ENCODE measurements at regions of chr3 and their contacts with region 1.

Region 1: GRCh38 chr3:112642912-112643506 is 2.1 kb upstream of the CCDC80 start:
- DNase-seq: peak; percentile 58 to 89 (median 80)
- ATAC-seq: peak; percentile 97
- H3K4me3 ChIP-seq: no peak overlapping the region
- H3K4me3 Mint-ChIP-seq: peak overlapping the region; percentile 63
- H3K27ac ChIP-seq: no peak overlapping the region
- H3K27ac Mint-ChIP-seq: no peak overlapping the region
- H3K4me1 ChIP-seq: peaks cover 3% of the 10 kb centered on the region
- H3K4me1 Mint-ChIP-seq: peaks cover 16% of the 10 kb centered on the region
- H3K27me3 ChIP-seq: no peaks in the 10 kb centered on the region
- H3K27me3 Mint-ChIP-seq: peaks cover 6% of the 10 kb centered on the region
- CTCF ChIP-seq: peak; percentile 68

Region 2: DNA sequence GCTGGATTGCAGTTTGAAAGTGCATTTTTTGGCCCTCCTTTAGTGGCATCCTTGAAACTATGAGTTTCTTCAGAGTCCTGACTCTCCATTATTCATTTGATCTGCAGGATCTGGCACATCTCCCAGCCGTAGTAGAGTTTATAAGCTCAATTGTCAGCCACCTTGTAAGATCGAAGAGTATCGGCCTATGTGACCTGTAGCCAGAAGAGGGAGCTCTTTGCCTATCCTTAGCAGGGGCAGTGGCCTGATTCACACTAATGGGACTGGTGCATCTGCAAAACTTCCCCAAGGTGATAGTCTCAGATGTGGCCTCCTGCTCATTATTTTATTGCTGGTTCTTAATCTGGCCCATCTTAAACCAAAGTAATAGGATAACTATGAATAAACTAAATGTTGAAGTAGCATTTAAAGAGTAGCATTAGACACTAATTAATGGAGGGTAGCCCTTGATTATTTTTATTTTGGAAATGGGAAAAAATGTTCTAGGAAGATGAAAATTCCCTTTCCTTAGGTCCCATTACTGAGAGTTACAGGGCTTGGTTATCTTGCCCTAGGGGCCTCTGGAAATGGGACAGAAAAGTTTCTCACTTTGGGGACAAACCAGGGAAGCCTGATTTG is 531.1 kb before region 1 on chr3:
- CTCF ChIA-PET with region 1: no interaction called
- POLR2A ChIA-PET with region 1: no interaction called
- intact Hi-C with region 1: no loop called
- DNase-seq: peak; percentile 30 to 84 (median 61)
- ATAC-seq: peak; percentile 94
- H3K4me3 ChIP-seq: no peak overlapping the region
- H3K4me3 Mint-ChIP-seq: no peak overlapping the region
- H3K27ac ChIP-seq: no peak overlapping the region
- H3K27ac Mint-ChIP-seq: no peak overlapping the region
- H3K4me1 ChIP-seq: no peaks in the 10 kb centered on the region
- H3K4me1 Mint-ChIP-seq: peaks cover 7% of the 10 kb centered on the region
- H3K27me3 ChIP-seq: no peaks in the 10 kb centered on the region
- H3K27me3 Mint-ChIP-seq: no peaks in the 10 kb centered on the region
- CTCF ChIP-seq: peak; percentile 82

Region 3: GRCh38 chr3:112136959-112137693 is 505.9 kb before region 1 on chr3:
- CTCF ChIA-PET with region 1: no interaction called
- POLR2A ChIA-PET with region 1: no interaction called
- intact Hi-C with region 1: no loop called
- DNase-seq: peak in 5 of 9 experiments; percentile 35 to 69 (median 46)
- ATAC-seq: peak; percentile 21
- H3K4me3 ChIP-seq: no peak overlapping the region
- H3K4me3 Mint-ChIP-seq: no peak overlapping the region
- H3K27ac ChIP-seq: no peak overlapping the region
- H3K27ac Mint-ChIP-seq: no peak overlapping the region
- H3K4me1 ChIP-seq: peaks cover 36% of the 10 kb centered on the region
- H3K4me1 Mint-ChIP-seq: peaks cover 62% of the 10 kb centered on the region
- H3K27me3 ChIP-seq: no peaks in the 10 kb centered on the region
- H3K27me3 Mint-ChIP-seq: no peaks in the 10 kb centered on the region
- CTCF ChIP-seq: peak; percentile 55

Region 4: GRCh38 chr3:112653209-112653871 is 10.3 kb after region 1 on chr3:
- CTCF ChIA-PET with region 1: interaction called, 18 read pairs
- POLR2A ChIA-PET with region 1: no interaction called
- intact Hi-C with region 1: no loop called
- DNase-seq: no peak
- ATAC-seq: no peak
- H3K4me3 ChIP-seq: no peak overlapping the region
- H3K4me3 Mint-ChIP-seq: no peak overlapping the region
- H3K27ac ChIP-seq: no peak overlapping the region
- H3K27ac Mint-ChIP-seq: no peak overlapping the region
- H3K4me1 ChIP-seq: no peaks in the 10 kb centered on the region
- H3K4me1 Mint-ChIP-seq: no peaks in the 10 kb centered on the region
- H3K27me3 ChIP-seq: no peaks in the 10 kb centered on the region
- H3K27me3 Mint-ChIP-seq: no peaks in the 10 kb centered on the region
- CTCF ChIP-seq: no peak

Region 5: DNA sequence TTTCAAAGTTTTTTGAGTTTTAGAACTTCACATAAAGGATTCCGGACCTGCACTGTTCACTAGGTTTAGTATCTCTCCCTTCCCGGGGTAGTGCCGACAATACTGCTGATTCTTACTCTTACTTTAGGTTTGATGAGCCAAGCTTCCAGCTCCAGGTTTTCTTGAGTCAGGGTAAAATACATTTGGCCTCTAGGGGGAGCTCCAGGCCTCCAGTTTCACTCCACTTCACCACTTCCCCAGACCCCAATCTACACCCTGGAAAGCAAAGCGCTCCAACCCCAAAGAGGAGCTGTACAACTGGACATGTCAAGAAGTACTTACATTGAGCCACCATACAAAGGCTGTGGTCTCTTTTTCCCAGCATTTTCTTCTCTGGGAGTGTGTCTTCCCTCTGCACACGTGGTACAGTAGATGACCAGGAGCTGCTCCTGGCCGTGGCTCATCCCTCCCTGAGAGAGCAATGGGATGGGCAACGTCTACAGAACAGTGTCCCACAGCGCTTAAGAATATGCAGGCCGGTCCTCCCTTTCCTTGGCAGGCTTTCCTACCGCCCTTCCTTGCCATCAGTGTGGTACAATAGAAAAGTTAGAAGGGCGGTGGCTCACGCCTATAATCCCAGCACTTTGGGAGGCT is 91.8 kb after region 1 on chr3:
- CTCF ChIA-PET with region 1: interaction called, 16 read pairs
- POLR2A ChIA-PET with region 1: no interaction called
- intact Hi-C with region 1: loop called (anchors 1 to 2 kb)
- DNase-seq: peak; percentile 28 to 80 (median 64)
- ATAC-seq: peak; percentile 73
- H3K4me3 ChIP-seq: no peak overlapping the region
- H3K4me3 Mint-ChIP-seq: no peak overlapping the region
- H3K27ac ChIP-seq: no peak overlapping the region
- H3K27ac Mint-ChIP-seq: no peak overlapping the region
- H3K4me1 ChIP-seq: peaks cover 38% of the 10 kb centered on the region
- H3K4me1 Mint-ChIP-seq: peaks cover 39% of the 10 kb centered on the region
- H3K27me3 ChIP-seq: no peaks in the 10 kb centered on the region
- H3K27me3 Mint-ChIP-seq: no peaks in the 10 kb centered on the region
- CTCF ChIP-seq: peak; percentile 70

Region 6: DNA sequence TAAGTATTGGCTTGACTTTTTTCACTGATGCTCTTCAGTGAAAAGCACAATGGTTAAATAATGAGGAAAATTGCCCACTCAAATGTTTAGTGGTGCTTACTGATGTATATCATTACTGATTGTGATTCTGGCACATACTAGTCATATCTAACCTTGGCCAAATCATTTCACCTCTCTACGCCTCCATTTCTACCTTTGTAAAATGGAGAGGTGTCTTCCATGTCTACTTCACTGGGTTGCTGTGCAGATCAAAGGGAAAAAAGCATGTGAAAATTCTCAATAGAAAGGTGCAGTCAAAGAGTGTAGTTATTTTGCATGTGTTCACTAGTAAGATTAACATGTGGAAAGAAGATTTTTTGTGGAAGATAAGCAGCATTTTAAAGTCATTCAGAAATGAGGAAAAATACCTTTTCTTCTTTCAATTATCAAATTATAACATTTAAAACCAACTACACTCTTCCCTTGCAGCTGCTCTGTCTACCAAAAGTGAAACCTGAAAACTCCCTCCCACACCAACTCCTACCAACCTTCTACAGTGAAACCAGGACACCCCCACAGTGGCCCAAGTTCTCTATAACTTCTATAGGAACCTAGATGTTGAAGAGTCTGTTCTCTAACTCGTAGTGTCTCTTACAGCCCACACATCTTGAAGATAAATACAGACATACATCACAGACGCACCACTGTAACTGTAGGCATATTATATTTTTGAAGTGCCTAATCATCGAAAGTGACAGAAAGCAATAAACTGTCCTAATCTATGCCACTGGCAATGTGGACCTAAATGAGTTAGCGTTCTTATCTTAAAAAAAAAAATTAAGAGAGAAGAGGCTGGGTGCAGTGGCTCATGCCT is 330.5 kb after region 1 on chr3:
- CTCF ChIA-PET with region 1: interaction called, 54 read pairs
- POLR2A ChIA-PET with region 1: no interaction called
- intact Hi-C with region 1: no loop called
- DNase-seq: peak in 5 of 9 experiments; percentile 18 to 74 (median 35)
- ATAC-seq: peak; percentile 86
- H3K4me3 ChIP-seq: peak overlapping the region; percentile 45 to 61
- H3K4me3 Mint-ChIP-seq: peak overlapping the region; percentile 93
- H3K27ac ChIP-seq: peak overlapping the region; percentile 34 to 81
- H3K27ac Mint-ChIP-seq: peak overlapping the region; percentile 97
- H3K4me1 ChIP-seq: peaks cover 66% of the 10 kb centered on the region
- H3K4me1 Mint-ChIP-seq: peaks cover 82% of the 10 kb centered on the region
- H3K27me3 ChIP-seq: no peaks in the 10 kb centered on the region
- H3K27me3 Mint-ChIP-seq: no peaks in the 10 kb centered on the region
- CTCF ChIP-seq: no peak

Region 7: DNA sequence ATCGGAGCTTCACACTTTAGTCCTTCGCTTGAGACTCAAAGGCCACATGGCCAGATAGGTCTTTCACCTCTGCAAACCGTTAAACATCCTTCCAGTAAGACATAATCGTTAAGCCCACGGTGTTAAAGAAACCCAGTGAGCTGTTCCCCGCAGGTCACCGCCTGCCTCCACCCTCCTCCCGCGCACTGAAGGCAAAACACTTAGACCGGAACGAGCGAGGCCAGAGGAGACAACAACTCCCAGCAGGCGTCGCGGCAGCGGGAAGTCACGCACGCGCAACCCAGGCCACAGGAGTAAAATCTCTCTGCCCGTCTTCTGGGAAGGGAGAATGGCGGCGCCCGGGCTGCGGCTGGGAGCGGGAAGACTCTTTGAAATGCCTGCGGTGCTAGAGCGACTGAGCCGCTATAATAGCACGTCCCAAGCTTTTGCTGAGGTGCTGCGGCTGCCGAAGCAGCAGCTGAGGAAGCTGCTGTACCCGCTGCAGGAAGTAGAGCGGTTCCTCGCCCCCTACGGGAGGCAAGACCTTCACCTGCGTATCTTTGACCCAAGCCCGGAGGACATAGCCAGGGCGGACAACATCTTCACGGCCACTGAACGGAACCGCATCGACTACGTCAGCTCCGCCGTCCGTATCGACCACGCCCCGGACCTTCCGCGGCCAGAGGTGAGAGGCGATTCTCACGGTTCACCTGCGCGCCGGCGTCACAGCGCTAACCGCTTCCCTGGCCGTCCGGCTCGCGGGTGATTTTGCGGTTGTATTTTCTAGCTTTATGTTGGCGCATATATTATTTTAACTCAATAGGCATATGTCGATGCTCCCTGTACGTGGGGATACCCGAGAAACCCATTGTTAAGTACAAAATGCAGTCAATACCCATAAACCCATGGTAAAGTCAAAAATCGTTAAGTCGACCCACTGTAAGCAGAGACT is 347.9 kb after region 1 on chr3 and contains the start of gene GTPBP8:
- CTCF ChIA-PET with region 1: interaction called, 10 read pairs
- POLR2A ChIA-PET with region 1: interaction called, 3 read pairs
- intact Hi-C with region 1: no loop called
- DNase-seq: peak; percentile 61 to 93 (median 83)
- ATAC-seq: peak; percentile 84
- H3K4me3 ChIP-seq: peak within 1 kb of the TSS; percentile 97 to 98
- H3K4me3 Mint-ChIP-seq: peak within 1 kb of the TSS; percentile 93
- H3K27ac ChIP-seq: peak within 1 kb of the TSS; percentile 88 to 99
- H3K27ac Mint-ChIP-seq: peak within 1 kb of the TSS; percentile 97
- H3K4me1 ChIP-seq: peaks cover 22% of the 10 kb centered on the region
- H3K4me1 Mint-ChIP-seq: peaks cover 57% of the 10 kb centered on the region
- H3K27me3 ChIP-seq: no peaks in the 10 kb centered on the region
- H3K27me3 Mint-ChIP-seq: no peaks in the 10 kb centered on the region
- CTCF ChIP-seq: peak; percentile 24
- total RNA-seq, gene GTPBP8: 20.1 to 22.3 TPM

Region 8: GRCh38 chr3:113051302-113051711 is 408.3 kb after region 1 on chr3:
- CTCF ChIA-PET with region 1: no interaction called
- POLR2A ChIA-PET with region 1: no interaction called
- intact Hi-C with region 1: loop called (anchors 1 to 5 kb)
- DNase-seq: peak; percentile 75 to 91 (median 84)
- ATAC-seq: peak; percentile 100
- H3K4me3 ChIP-seq: no peak overlapping the region
- H3K4me3 Mint-ChIP-seq: no peak overlapping the region
- H3K27ac ChIP-seq: no peak overlapping the region
- H3K27ac Mint-ChIP-seq: no peak overlapping the region
- H3K4me1 ChIP-seq: no peaks in the 10 kb centered on the region
- H3K4me1 Mint-ChIP-seq: no peaks in the 10 kb centered on the region
- H3K27me3 ChIP-seq: no peaks in the 10 kb centered on the region
- H3K27me3 Mint-ChIP-seq: no peaks in the 10 kb centered on the region
- CTCF ChIP-seq: peak; percentile 84

Region 9: DNA sequence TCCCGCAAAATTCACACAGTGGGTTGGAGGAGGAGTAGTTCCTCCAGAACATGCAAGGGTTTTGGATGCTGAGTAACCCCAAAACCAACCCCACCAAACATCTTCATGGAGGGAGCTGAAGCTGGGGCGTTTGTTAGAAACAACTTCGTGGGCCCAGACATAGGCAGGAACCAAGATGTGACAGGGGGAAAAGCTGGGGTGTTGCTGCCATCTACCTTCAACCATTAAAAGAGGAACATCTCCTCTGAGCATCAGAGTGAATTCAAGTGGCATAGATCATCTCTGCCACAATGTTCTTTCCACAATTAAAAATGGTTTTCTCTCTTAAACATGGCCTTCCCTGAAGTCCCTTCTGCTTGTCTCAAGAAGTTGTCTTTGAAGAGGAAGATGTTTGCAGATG is 909.8 kb after region 1 on chr3:
- CTCF ChIA-PET with region 1: no interaction called
- POLR2A ChIA-PET with region 1: no interaction called
- intact Hi-C with region 1: loop called in 1 of 2 experiments (anchors 10 kb)
- DNase-seq: peak in 5 of 9 experiments; percentile 30 to 70 (median 55)
- ATAC-seq: peak; percentile 93
- H3K4me3 ChIP-seq: no peak overlapping the region
- H3K4me3 Mint-ChIP-seq: no peak overlapping the region
- H3K27ac ChIP-seq: no peak overlapping the region
- H3K27ac Mint-ChIP-seq: peak overlapping the region; percentile 12
- H3K4me1 ChIP-seq: no peaks in the 10 kb centered on the region
- H3K4me1 Mint-ChIP-seq: peaks cover 62% of the 10 kb centered on the region
- H3K27me3 ChIP-seq: no peaks in the 10 kb centered on the region
- H3K27me3 Mint-ChIP-seq: no peaks in the 10 kb centered on the region
- CTCF ChIP-seq: peak; percentile 40